Endothelial cell of umbilical vein (primary cell): ENCODE measurements at regions of chr7 and their contacts with region 1.

Region 1: DNA sequence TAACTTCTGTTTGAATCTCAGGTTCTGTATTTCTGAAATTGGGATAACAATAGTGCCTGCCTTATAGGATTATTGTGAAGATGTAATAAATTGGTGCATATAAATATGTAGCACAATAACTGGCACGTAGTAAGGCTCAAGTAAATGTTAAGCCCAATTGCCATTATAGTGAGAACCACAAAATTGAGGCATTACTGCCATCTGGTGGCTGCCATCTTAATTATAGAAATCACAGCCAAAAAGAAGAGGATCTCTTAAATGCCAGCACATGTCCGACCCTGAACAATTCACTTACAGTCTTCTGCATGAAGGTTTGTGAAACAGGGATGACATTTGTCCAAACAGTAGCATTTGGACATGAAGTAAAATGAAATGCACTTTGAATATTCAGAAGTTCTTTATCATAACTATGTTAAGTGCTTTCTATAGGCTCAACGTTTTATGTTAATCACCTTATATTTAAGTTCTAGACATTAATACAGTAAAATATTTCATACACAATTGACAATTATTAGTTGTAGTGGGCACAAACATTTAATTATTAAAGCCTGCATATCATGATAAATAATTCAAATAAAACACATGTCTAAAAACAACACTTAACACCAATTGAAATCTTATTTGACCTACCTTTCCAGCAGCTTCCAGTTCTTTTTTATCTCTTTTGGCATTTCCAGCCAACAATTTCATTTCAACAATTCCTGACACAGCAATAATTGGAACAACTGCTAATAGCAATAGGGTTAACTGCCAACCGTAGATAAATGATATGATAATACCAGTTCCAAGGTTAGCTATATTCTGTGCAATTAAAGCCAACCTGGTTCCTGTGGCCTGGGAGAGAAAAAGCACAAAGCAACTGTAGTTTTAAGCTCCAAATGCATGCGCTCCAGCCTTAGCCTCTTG is 58.5 kb downstream of the ABCB4 start:
- DNase-seq: peak; percentile 84
- H3K4me3 ChIP-seq: no peak overlapping the region
- H3K27ac ChIP-seq: no peak overlapping the region
- H3K4me1 ChIP-seq: no peaks in the 10 kb centered on the region
- H3K27me3 ChIP-seq: peaks cover 8 to 12% of the 10 kb centered on the region in 2 experiments
- CTCF ChIP-seq: peak; percentile 41 to 44
- POLR2A ChIP-seq: no peak

Region 2: DNA sequence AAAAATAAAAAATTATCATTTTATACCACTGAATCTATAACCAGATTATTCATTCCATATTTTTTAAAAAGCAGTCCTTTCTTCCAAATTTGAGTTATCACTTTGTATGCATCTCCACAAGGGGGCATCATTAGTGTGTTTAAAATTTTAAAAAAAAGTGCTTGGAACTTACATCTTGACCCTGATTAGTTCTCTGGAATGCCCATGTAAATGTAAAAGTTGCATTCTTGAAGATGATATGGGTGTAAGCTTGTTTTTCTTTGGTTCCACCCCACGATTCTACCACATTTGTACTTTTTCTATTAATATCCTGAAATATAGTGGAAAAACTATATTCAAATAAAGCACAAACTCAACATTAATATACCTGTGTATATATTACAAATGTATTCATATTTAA is 502.4 kb before region 1 on chr7:
- CTCF ChIA-PET with region 1: interaction called, 3 read pairs
- POLR2A ChIA-PET with region 1: no interaction called
- dilution Hi-C with region 1: no loop called
- intact Hi-C with region 1: loop called (anchors 5 kb)
- DNase-seq: peak; percentile 30
- H3K4me3 ChIP-seq: no peak overlapping the region
- H3K27ac ChIP-seq: no peak overlapping the region
- H3K4me1 ChIP-seq: no peaks in the 10 kb centered on the region
- H3K27me3 ChIP-seq: no peaks in the 10 kb centered on the region
- CTCF ChIP-seq: peak; percentile 28 to 39
- POLR2A ChIP-seq: no peak

Region 3: DNA sequence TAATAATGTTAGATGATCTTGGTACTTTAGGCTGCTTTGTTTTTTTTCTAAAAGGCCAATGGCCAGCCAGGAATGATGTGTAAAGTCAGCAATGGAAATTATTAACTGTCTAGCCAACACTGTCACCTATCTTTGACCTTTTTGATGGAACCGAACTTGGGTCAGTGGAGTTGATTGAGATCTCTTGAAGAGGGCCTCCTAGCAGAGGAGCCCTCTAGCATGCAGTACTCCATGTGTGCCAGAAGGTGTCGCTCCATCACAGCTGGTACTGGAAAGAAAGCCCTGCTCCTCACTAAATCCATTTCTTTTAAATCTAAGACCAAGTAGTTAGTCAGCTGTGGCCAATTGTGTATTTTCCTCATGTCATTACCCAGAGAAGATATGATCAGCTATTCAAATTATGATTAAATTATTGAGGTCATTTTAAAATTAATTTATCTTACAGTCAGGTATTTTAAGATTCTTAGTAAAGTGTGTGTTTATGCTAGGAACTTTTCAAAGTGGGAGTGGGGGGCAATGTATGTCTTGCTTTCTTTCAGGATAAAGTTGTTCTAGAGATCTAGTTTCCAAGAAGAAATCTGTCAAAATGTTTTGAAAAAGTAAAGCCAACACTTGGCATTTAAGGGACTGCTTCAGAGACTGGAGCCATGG is 104.6 kb before region 1 on chr7:
- CTCF ChIA-PET with region 1: interaction called, 299 read pairs
- POLR2A ChIA-PET with region 1: no interaction called
- dilution Hi-C with region 1: loop called (anchors 25 kb)
- intact Hi-C with region 1: loop called (anchors 1 kb)
- DNase-seq: peak; percentile 75
- H3K4me3 ChIP-seq: no peak overlapping the region
- H3K27ac ChIP-seq: no peak overlapping the region
- H3K4me1 ChIP-seq: peaks cover 3% of the 10 kb centered on the region
- H3K27me3 ChIP-seq: no peaks in the 10 kb centered on the region
- CTCF ChIP-seq: peak; percentile 92 to 93
- POLR2A ChIP-seq: no peak

Region 4: DNA sequence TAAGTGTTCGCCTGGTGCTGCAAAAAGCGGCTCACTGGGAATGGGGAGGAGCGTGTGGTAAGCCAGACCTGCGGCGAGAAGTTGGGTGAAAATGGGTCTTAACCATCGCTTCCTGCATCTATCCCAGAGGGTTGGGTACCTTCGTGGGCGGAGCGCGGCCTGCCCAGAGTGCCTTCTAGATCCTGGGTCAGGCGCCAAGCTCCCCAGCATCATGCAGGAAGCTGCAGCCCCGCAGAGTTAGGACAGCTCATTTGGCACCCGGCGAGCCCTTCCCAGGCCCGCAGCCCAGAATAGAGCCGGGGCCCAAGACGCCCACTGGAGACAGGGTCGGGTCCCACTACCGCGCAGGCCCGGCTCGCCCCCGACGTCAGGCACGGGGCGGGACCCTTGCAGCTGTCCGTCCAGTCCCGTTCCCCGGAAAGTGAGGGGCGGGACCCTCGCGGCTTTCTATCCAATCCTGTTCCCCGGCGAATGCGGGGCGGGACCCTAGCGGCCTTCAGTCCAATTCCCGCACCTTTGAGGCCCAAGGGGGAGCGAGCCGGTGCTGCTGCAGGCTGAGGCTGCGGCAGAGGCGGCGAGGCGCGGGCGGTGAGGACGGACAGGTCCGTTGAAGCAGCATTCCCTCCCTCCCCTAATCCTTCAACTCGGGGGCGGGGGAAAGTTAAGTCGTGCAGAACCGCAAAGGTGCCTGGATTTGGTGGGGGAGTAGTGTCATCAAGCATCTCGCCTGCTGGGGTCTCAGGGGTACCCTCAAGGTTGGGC is 71.6 kb before region 1 on chr7 and contains the start of gene CROT:
- CTCF ChIA-PET with region 1: interaction called, 15 read pairs
- POLR2A ChIA-PET with region 1: no interaction called
- dilution Hi-C with region 1: no loop called
- intact Hi-C with region 1: no loop called
- DNase-seq: peak; percentile 97
- H3K4me3 ChIP-seq: peak within 1 kb of the TSS; percentile 49 to 75 (median 67)
- H3K27ac ChIP-seq: peak within 1 kb of the TSS; percentile 4
- H3K4me1 ChIP-seq: peaks cover 6% of the 10 kb centered on the region
- H3K27me3 ChIP-seq: no peaks in the 10 kb centered on the region
- CTCF ChIP-seq: peak in 1 of 2 donors; percentile 10
- POLR2A ChIP-seq: peak; percentile 83
- total RNA-seq, gene CROT: 5.7 and 6.6 TPM in 2 replicates

Region 5: GRCh38 chr7:87404674-87405073 is 12.3 kb before region 1 on chr7:
- CTCF ChIA-PET with region 1: interaction called, 13 read pairs
- POLR2A ChIA-PET with region 1: interaction called, 3 read pairs
- dilution Hi-C with region 1: no loop called
- intact Hi-C with region 1: no loop called
- DNase-seq: no peak
- H3K4me3 ChIP-seq: no peak overlapping the region
- H3K27ac ChIP-seq: no peak overlapping the region
- H3K4me1 ChIP-seq: no peaks in the 10 kb centered on the region
- H3K27me3 ChIP-seq: peaks cover 3 to 6% of the 10 kb centered on the region in 2 experiments
- CTCF ChIP-seq: no peak
- POLR2A ChIP-seq: no peak

Region 6: DNA sequence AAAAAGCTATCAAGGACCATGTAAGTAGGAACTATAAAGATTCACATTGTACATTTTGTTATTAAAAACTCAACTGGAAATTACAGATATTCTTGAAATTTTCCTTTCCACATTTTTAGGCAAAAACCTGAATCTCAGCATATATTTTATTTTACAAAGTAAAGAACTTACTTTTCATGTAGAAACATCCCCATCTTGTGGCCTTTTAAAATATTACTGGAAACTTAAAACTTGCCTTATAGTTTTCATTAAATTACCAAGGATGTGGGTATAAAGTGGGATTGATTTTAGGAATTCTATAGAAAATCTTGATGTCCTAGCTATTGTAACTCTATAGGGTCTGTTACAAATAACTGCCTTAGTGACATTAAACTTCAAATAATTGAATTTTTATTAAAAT is 469.9 kb after region 1 on chr7:
- CTCF ChIA-PET with region 1: interaction called, 12 read pairs
- POLR2A ChIA-PET with region 1: no interaction called
- dilution Hi-C with region 1: no loop called
- intact Hi-C with region 1: loop called (anchors 2 kb)
- DNase-seq: peak; percentile 56
- H3K4me3 ChIP-seq: no peak overlapping the region
- H3K27ac ChIP-seq: no peak overlapping the region
- H3K4me1 ChIP-seq: no peaks in the 10 kb centered on the region
- H3K27me3 ChIP-seq: no peaks in the 10 kb centered on the region
- CTCF ChIP-seq: peak; percentile 3 to 9
- POLR2A ChIP-seq: no peak